Activated naive CD4-positive, alpha-beta T cell treated with anti-CD3 and anti-CD28 coated beads for 36 hours (primary cell): ENCODE measurements at regions of chr1 and their contacts with region 1.

Region 1: GRCh38 chr1:151968058-151968457 is 25.6 kb downstream of the S100A10 start:
- DNase-seq: peak; percentile 66
- H3K4me3 Mint-ChIP-seq: no peak overlapping the region
- H3K27ac Mint-ChIP-seq: no peak overlapping the region
- H3K4me1 Mint-ChIP-seq: peaks cover 25% of the 10 kb centered on the region
- H3K27me3 Mint-ChIP-seq: peaks cover 2% of the 10 kb centered on the region

Region 2: GRCh38 chr1:151940541-151940940 is 27.5 kb before region 1 on chr1:
- CTCF ChIA-PET with region 1: interaction called, 35 read pairs
- intact Hi-C with region 1: loop called (anchors 1 kb)
- DNase-seq: no peak
- H3K4me3 Mint-ChIP-seq: no peak overlapping the region
- H3K27ac Mint-ChIP-seq: no peak overlapping the region
- H3K4me1 Mint-ChIP-seq: peaks cover 18% of the 10 kb centered on the region
- H3K27me3 Mint-ChIP-seq: no peaks in the 10 kb centered on the region

Region 3: GRCh38 chr1:151984313-151984956 is 16.4 kb after region 1 on chr1:
- CTCF ChIA-PET with region 1: interaction called, 46 read pairs
- intact Hi-C with region 1: loop called (anchors 1 kb)
- DNase-seq: peak; percentile 68
- H3K4me3 Mint-ChIP-seq: peak overlapping the region; percentile 22
- H3K27ac Mint-ChIP-seq: peak overlapping the region; percentile 84
- H3K4me1 Mint-ChIP-seq: peaks cover 48% of the 10 kb centered on the region
- H3K27me3 Mint-ChIP-seq: no peaks in the 10 kb centered on the region

Region 4: DNA sequence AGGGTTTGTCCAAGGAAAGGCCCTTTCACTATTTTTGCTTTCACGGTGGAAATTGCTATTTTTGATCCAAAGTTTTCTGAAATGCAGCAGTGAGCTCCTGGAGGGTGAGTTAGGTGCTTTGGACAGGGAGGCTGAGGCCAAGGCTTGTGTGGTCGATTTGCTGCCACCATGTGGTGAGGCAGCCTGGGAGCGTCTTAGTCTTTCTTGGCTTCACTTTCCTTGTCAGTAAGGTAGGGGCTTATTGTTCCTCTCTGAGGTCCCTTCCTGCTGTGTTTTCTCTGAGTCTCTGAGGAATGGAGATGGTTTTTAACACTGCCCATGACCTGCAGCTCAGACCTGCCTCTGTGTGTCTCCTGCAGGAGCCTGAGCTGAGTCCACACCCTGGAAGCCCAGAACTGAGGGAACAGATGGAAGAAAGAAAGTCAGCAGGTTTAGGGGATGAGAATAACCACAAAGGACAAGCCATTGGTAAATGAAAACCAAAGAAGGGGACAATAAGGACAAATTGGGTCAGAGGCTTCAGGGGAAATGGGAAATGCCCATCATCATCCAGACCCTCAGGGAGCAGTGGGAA is 45.7 kb after region 1 on chr1:
- CTCF ChIA-PET with region 1: interaction called, 12 read pairs
- intact Hi-C with region 1: loop called (anchors 1 kb)
- DNase-seq: peak; percentile 66
- H3K4me3 Mint-ChIP-seq: no peak overlapping the region
- H3K27ac Mint-ChIP-seq: no peak overlapping the region
- H3K4me1 Mint-ChIP-seq: no peaks in the 10 kb centered on the region
- H3K27me3 Mint-ChIP-seq: peaks cover 4% of the 10 kb centered on the region

Region 5: DNA sequence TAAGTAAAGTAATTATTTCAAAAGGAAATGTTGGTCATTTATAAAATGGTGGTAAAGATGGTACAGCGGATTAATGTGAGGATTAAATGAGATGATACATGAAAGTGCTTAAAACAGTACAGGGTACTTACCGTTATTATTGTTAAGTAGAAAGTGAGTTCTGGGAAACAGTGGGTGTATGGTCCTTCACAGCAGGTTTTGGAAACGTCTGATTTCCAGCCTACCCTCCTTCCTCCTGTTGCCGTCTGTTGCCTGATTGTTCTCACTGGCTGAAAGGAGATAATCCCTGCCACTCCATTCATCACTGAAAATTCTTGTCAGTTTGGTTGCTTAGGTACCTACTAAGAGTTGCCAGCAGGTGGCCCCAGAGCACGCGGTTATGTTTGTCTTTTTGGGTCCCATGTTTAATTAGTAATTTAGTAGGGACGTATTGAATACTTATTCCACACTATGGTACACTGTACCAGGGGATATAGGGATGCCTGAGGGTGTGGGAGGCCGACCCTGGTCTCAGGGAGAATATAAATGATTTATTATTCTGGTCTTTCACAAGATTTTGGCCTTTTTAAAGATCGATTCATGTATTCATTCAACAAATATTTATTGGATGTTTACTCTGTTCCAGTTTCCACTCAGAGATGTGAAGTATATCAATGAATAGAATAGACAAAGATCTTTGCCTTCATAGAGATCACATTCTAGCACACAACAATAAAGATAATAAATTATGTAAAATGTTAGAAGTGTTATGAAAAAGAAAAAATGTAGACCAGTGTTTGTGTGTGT is 221.8 kb after region 1 on chr1:
- CTCF ChIA-PET with region 1: no interaction called
- intact Hi-C with region 1: loop called (anchors 2 kb)
- DNase-seq: peak; percentile 84
- H3K4me3 Mint-ChIP-seq: peak overlapping the region; percentile 66
- H3K27ac Mint-ChIP-seq: no peak overlapping the region
- H3K4me1 Mint-ChIP-seq: peaks cover 6% of the 10 kb centered on the region
- H3K27me3 Mint-ChIP-seq: peaks cover 4% of the 10 kb centered on the region

Region 6: DNA sequence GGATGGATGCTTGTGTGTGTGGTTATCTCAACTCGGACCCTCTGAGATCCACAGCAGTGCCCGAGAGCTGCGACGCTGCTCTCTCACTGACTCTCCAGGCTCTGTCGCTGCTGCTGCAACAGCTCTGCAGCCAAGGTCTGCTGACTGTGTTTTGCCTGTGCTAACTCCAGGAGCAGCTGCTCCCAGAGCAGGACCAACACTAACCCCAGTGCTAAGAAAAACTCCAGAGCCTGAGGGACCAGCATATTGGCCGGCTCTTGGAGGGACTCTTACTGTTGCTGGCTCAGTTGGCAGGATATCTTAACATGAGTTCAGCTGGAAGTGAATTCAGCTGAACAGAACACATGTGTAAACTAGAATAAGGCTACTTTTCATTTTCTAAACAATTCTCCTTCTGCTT is 711.4 kb after region 1 on chr1:
- CTCF ChIA-PET with region 1: no interaction called
- intact Hi-C with region 1: no loop called
- DNase-seq: no peak
- H3K4me3 Mint-ChIP-seq: no peak overlapping the region
- H3K27ac Mint-ChIP-seq: no peak overlapping the region
- H3K4me1 Mint-ChIP-seq: no peaks in the 10 kb centered on the region
- H3K27me3 Mint-ChIP-seq: peaks cover 26% of the 10 kb centered on the region